KBM-7 (cell line): ENCODE measurements at regions of chr19 and their contacts with region 1.

Region 1: DNA sequence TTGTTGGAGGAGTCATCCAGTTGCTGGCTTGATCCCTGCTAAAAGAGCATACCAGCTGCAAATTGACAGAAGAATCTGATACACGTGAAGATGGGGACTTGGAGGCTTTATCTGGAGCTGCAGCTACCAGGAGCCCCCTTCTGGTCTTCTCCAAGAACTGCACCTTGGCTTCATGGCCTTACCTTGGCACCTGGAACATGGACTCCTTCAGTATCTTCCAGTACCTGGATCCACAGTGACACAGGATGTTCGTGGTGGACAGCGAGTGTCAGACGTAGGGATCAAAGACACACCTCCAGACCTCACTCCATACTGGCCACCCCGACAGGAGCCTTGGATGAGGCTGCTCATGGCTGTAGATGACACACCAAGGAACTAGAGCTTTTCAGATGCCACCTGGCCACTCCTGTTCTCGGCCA is 9.9 kb upstream of the ACSBG2 start:
- DNase-seq: peak; percentile 84

Region 2: DNA sequence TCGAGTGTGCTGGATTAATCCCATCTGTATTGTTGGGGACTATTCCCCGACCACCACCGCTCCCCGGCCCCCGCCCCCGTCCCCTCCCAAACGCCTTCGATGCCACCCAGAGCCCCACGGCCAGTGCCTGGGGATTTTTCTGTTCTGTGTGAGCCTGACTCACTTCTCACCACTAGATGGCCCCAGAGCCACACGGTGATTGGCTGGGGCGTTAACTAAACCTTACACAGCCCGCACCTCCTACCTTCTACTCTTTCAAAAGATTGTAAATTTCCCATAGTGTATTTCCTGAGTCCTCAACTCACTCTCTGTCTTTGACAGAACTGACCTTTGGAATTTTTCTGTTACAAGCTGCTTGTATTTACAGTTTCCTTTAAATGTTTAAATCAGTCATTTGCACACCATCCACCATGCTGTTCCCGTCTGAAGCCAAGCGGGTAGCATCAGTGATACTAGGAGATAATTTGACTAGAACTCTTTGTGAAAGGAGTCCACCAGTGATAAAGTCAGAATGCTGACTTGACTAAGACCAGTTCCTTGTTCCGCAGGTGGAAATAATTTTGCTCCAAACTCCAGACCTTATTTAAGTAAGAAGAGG is 76.7 kb before region 1 on chr19:
- in situ Hi-C with region 1: loop called (anchors 10 kb)
- DNase-seq: peak; percentile 85